ENCODE measurements at regions of chr2 and their contacts with region 1.

Region 1: DNA sequence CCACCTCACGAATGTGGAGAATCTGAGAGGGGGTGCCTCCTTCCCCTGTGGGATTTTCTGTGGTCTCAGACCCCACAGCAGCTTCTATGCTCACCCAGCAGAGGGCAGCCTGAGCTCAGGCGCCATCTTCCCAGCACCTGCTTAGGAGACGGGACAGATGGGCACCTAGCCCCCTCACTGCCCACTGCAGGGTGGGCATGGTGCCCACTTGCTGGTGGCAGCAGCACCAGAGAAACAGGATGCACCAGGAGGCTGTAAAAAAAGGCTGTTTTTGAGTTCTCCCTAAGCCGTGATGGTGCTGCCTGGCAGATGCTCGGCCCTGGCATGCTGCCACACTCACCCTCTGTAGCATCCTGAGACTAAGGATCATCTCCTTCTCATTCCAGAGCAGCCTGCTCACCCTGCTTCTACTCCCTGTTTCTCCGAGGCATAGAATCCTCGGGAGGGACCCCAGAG is 19.1 kb upstream of the SLC20A1 start:
- DNase-seq: peak; percentile 41
- ATAC-seq: peak; percentile 93
- H3K4me3 ChIP-seq: no peak overlapping the region; a peak in 1 of 6 replicates
- H3K27ac ChIP-seq: no peak overlapping the region
- H3K4me1 ChIP-seq: peaks cover 34% of the 10 kb centered on the region
- H3K27me3 ChIP-seq: peaks cover 0 to 28% of the 10 kb centered on the region in 2 experiments; a peak in 3 of 5 replicates
- CTCF ChIP-seq: peak; percentile 99
- EP300 ChIP-seq: no peak
- POLR2A ChIP-seq: no peak
- RAD21 ChIP-seq: peak; percentile 98

Region 2: GRCh38 chr2:112685271-112685884 is 58.7 kb after region 1 on chr2:
- CTCF ChIA-PET with region 1: interaction called, 33 read pairs
- POLR2A ChIA-PET with region 1: interaction called, 3 read pairs
- in situ Hi-C with region 1: loop called (anchors 5 kb)
- intact Hi-C with region 1: no loop called
- DNase-seq: no peak
- ATAC-seq: peak; percentile 38
- H3K4me3 ChIP-seq: no peak overlapping the region
- H3K27ac ChIP-seq: no peak overlapping the region
- H3K4me1 ChIP-seq: peaks cover 53% of the 10 kb centered on the region
- H3K27me3 ChIP-seq: peaks cover 0 to 25% of the 10 kb centered on the region in 2 experiments; a peak in 3 of 5 replicates
- CTCF ChIP-seq: no peak
- EP300 ChIP-seq: no peak
- POLR2A ChIP-seq: no peak
- RAD21 ChIP-seq: no peak

Region 3: DNA sequence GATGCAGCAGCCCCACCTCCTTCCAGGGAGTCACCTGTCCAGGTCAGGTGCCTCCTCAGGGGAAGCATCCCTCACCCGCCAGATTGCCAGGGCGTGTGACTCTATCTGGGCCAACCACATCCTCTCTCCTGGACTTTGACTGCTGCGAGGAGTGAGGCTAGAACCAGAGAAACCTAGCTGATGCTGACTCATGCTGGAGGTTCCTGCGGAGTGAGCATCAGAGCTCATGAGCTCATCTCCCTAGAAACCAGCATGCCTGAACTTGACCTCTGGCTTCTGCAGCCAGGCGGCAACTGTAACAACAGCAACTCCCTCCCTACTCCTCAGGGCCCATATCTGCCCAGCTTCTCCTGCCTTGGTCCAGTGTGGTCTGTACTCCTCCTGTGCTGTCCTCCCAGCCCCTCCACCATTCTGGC is 65.9 kb after region 1 on chr2:
- CTCF ChIA-PET with region 1: interaction called, 33 read pairs
- POLR2A ChIA-PET with region 1: interaction called, 3 read pairs
- in situ Hi-C with region 1: loop called (anchors 5 kb)
- intact Hi-C with region 1: loop called (anchors 1 kb)
- DNase-seq: peak; percentile 96
- ATAC-seq: peak; percentile 92
- H3K4me3 ChIP-seq: no peak overlapping the region
- H3K27ac ChIP-seq: no peak overlapping the region
- H3K4me1 ChIP-seq: peaks cover 52% of the 10 kb centered on the region
- H3K27me3 ChIP-seq: no peaks in the 10 kb centered on the region
- CTCF ChIP-seq: peak; percentile 33
- EP300 ChIP-seq: peak; percentile 48 to 55; a peak in 1 of 4 replicates
- POLR2A ChIP-seq: no peak
- RAD21 ChIP-seq: no peak

Region 4: GRCh38 chr2:112821142-112821541 is 194.5 kb after region 1 on chr2:
- CTCF ChIA-PET with region 1: no interaction called
- POLR2A ChIA-PET with region 1: no interaction called
- in situ Hi-C with region 1: no loop called
- intact Hi-C with region 1: no loop called
- DNase-seq: no peak
- ATAC-seq: no peak
- H3K4me3 ChIP-seq: no peak overlapping the region
- H3K27ac ChIP-seq: no peak overlapping the region
- H3K4me1 ChIP-seq: peaks cover 67% of the 10 kb centered on the region
- H3K27me3 ChIP-seq: no peaks in the 10 kb centered on the region
- CTCF ChIP-seq: no peak
- EP300 ChIP-seq: no peak
- POLR2A ChIP-seq: no peak
- RAD21 ChIP-seq: no peak